HepG2 (cell line): ENCODE measurements at regions of chr6 and their contacts with region 1.

Region 1: DNA sequence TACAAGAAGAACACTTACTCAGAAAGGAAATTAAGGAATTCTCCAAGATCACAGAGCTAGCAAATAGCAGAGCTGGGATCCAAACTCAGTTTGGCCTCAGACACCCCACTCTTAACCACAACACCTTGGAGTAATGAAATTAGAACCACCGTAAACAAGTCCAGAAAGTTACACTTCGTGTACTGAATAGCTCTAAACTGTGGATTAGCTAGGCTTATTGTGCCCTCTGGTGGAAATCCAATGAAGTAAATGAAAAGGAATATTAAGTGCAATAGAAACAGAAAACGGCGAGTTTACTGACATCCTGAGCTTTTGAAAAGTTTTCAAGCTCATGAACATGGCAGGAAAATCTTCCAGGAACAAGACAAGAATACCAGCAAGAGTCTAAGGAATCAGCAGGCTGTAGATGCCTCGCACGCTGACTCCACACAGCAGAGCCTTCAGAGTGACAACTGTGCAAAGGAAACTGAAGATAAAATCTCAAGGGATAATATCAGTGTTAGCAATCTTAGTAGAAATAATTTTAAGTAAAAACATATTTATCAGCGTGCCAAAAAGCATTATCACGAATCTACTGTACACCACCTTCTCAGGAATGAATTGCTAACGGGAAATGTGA is 34.6 kb downstream of the FBXO5 start:
- DNase-seq: peak; percentile 54
- ATAC-seq: peak; percentile 94
- H3K4me3 ChIP-seq: no peak overlapping the region
- H3K27ac ChIP-seq: no peak overlapping the region
- H3K4me1 ChIP-seq: no peaks in the 10 kb centered on the region
- H3K27me3 ChIP-seq: peaks cover 2 to 5% of the 10 kb centered on the region in 2 experiments; a peak in 3 of 5 replicates
- CTCF ChIP-seq: peak; percentile 83
- EP300 ChIP-seq: no peak
- POLR2A ChIP-seq: no peak
- RAD21 ChIP-seq: peak; percentile 68

Region 2: DNA sequence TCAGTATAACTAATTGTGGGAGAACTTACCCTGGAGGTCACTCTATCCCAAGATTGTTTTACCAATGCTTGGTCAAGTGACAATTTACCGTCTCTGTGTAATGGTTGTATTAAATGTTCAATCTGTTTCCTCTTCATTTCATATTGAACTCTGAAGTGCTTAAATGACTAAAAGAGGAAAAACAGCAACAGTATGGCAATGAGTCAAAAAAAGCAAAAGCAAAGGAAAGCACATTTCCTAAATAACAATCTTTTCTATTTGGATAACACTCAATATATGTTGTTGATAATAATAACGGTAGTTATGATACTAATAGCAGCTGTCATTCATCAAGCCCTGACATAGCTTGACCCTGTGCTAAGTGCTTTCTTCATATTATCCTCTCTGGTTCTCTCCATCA is 463.5 kb before region 1 on chr6:
- CTCF ChIA-PET with region 1: no interaction called
- POLR2A ChIA-PET with region 1: no interaction called
- in situ Hi-C with region 1: no loop called
- intact Hi-C with region 1: loop called (anchors 10 kb)
- DNase-seq: no peak
- ATAC-seq: no peak
- H3K4me3 ChIP-seq: no peak overlapping the region
- H3K27ac ChIP-seq: no peak overlapping the region
- H3K4me1 ChIP-seq: no peaks in the 10 kb centered on the region
- H3K27me3 ChIP-seq: no peaks in the 10 kb centered on the region
- CTCF ChIP-seq: no peak
- EP300 ChIP-seq: no peak
- POLR2A ChIP-seq: no peak
- RAD21 ChIP-seq: no peak

Region 3: DNA sequence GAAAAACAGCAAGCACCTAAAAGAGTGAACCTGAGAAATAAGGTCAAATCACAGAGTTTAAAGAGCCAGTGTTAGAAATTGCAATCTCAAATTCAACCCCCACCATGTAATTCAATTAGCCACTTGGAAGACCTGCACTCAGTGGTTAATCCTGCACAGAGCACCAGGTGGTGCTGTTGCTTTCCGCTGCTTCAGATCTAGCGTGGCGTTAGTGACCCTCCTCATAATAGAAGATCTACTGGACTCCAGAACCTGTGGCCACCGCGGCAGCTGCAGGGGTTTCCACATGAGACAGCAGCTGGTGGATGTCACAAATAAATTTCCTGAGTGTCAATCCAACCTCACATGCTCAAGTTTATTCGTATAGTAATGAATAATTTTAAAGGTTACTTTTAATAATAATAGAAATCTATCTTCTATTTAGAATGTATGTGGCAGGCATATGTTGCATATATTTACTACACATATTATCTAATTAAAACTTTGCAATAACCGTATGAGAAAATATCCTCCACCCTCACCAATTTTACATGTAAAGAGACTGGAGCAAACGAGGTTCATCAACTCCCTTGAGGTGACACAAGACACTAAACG is 395.5 kb before region 1 on chr6:
- CTCF ChIA-PET with region 1: interaction called, 9 read pairs
- POLR2A ChIA-PET with region 1: no interaction called
- in situ Hi-C with region 1: no loop called
- intact Hi-C with region 1: loop called (anchors 1 kb)
- DNase-seq: peak; percentile 73
- ATAC-seq: peak; percentile 100
- H3K4me3 ChIP-seq: no peak overlapping the region
- H3K27ac ChIP-seq: no peak overlapping the region
- H3K4me1 ChIP-seq: no peaks in the 10 kb centered on the region
- H3K27me3 ChIP-seq: no peaks in the 10 kb centered on the region; a peak in 1 of 5 replicates
- CTCF ChIP-seq: peak; percentile 90
- EP300 ChIP-seq: no peak
- POLR2A ChIP-seq: no peak
- RAD21 ChIP-seq: peak; percentile 82

Region 4: GRCh38 chr6:152727525-152727924 is 220.7 kb before region 1 on chr6:
- CTCF ChIA-PET with region 1: no interaction called
- POLR2A ChIA-PET with region 1: no interaction called
- in situ Hi-C with region 1: no loop called
- intact Hi-C with region 1: loop called (anchors 1 kb)
- DNase-seq: no peak
- ATAC-seq: peak; percentile 90
- H3K4me3 ChIP-seq: no peak overlapping the region
- H3K27ac ChIP-seq: no peak overlapping the region
- H3K4me1 ChIP-seq: no peaks in the 10 kb centered on the region
- H3K27me3 ChIP-seq: no peaks in the 10 kb centered on the region
- CTCF ChIP-seq: peak; percentile 53
- EP300 ChIP-seq: no peak
- POLR2A ChIP-seq: no peak
- RAD21 ChIP-seq: no peak

Region 5: GRCh38 chr6:152750694-152751093 is 197.6 kb before region 1 on chr6 and contains the start of gene VIP:
- CTCF ChIA-PET with region 1: no interaction called
- POLR2A ChIA-PET with region 1: no interaction called
- in situ Hi-C with region 1: loop called (anchors 10 kb)
- intact Hi-C with region 1: loop called (anchors 2 kb)
- DNase-seq: peak; percentile 35
- ATAC-seq: peak; percentile 89
- H3K4me3 ChIP-seq: no peak within 1 kb of the TSS
- H3K27ac ChIP-seq: no peak within 1 kb of the TSS
- H3K4me1 ChIP-seq: peaks cover 8% of the 10 kb centered on the region; the same call in 1 of the 2 replicates
- H3K27me3 ChIP-seq: no peaks in the 10 kb centered on the region
- CTCF ChIP-seq: no peak
- EP300 ChIP-seq: no peak
- POLR2A ChIP-seq: no peak
- RAD21 ChIP-seq: no peak
- total RNA-seq, gene VIP: not detected in 2 replicates

Region 6: GRCh38 chr6:152863618-152864326 is 84.5 kb before region 1 on chr6:
- CTCF ChIA-PET with region 1: interaction called, 28 read pairs
- POLR2A ChIA-PET with region 1: no interaction called
- in situ Hi-C with region 1: no loop called
- intact Hi-C with region 1: loop called (anchors 1 kb)
- DNase-seq: peak; percentile 74
- ATAC-seq: peak; percentile 98
- H3K4me3 ChIP-seq: no peak overlapping the region
- H3K27ac ChIP-seq: no peak overlapping the region
- H3K4me1 ChIP-seq: no peaks in the 10 kb centered on the region
- H3K27me3 ChIP-seq: no peaks in the 10 kb centered on the region
- CTCF ChIP-seq: peak; percentile 88
- EP300 ChIP-seq: no peak
- POLR2A ChIP-seq: no peak
- RAD21 ChIP-seq: peak; percentile 65